Right ventricle myocardium inferior (tissue), 1 donor: ENCODE measurements at regions of chr18 and their contacts with region 1.

Region 1: GRCh38 chr18:22703883-22704585 is 229.1 kb upstream of the RBBP8 start:
- DNase-seq: no peak
- ATAC-seq: peak; percentile 68

Region 2: GRCh38 chr18:22609642-22610041 is 94.4 kb before region 1 on chr18:
- intact Hi-C with region 1: loop called (anchors 5 kb)
- DNase-seq: peak; percentile 80
- ATAC-seq: peak; percentile 29

Region 3: DNA sequence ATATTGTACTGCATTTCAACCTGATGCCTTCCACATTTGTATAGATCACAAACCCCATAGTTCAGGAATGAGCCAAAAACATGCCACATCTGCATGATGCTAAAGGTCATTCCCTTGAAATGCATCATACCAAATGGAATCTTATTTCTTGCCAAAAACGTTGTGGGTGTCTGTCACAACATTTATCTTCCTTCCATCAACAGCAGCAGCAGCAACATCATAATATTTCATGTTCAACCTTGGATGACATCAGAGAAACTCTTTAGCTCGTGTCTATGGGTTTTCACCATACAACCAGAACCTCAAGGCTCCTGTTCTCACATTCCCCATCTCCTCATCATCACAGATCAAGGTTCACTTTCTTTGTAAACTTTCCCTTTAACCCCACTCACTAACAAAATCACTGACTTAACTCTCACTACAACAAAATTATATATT is 65.0 kb before region 1 on chr18:
- intact Hi-C with region 1: no loop called
- DNase-seq: no peak
- ATAC-seq: no peak

Region 4: GRCh38 chr18:22753130-22753831 is 49.2 kb after region 1 on chr18:
- intact Hi-C with region 1: loop called (anchors 10 kb)
- DNase-seq: no peak
- ATAC-seq: peak; percentile 90